Activated CD4-positive, alpha-beta memory T cell treated with anti-CD3 and anti-CD28 coated beads for 36 hours (primary cell): ENCODE measurements at regions of chrX and their contacts with region 1.

Region 1: GRCh38 chrX:120664081-120664480 is 34.2 kb upstream of the C1GALT1C1 start:
- DNase-seq: no peak
- H3K4me3 Mint-ChIP-seq: no peak overlapping the region
- H3K27ac Mint-ChIP-seq: no peak overlapping the region
- H3K4me1 Mint-ChIP-seq: peaks cover 6% of the 10 kb centered on the region
- H3K27me3 Mint-ChIP-seq: no peaks in the 10 kb centered on the region

Region 2: GRCh38 chrX:120485638-120486520 is 178.2 kb before region 1 on chrX:
- CTCF ChIA-PET with region 1: no interaction called
- POLR2A ChIA-PET with region 1: no interaction called
- intact Hi-C with region 1: loop called (anchors 1 kb)
- DNase-seq: peak; percentile 69
- H3K4me3 Mint-ChIP-seq: peak overlapping the region; percentile 69
- H3K27ac Mint-ChIP-seq: peak overlapping the region; percentile 86
- H3K4me1 Mint-ChIP-seq: peaks cover 26% of the 10 kb centered on the region
- H3K27me3 Mint-ChIP-seq: no peaks in the 10 kb centered on the region

Region 3: GRCh38 chrX:120514236-120514635 is 149.8 kb before region 1 on chrX:
- CTCF ChIA-PET with region 1: interaction called, 6 read pairs
- POLR2A ChIA-PET with region 1: no interaction called
- intact Hi-C with region 1: loop called (anchors 5 kb)
- DNase-seq: no peak
- H3K4me3 Mint-ChIP-seq: no peak overlapping the region
- H3K27ac Mint-ChIP-seq: no peak overlapping the region
- H3K4me1 Mint-ChIP-seq: no peaks in the 10 kb centered on the region
- H3K27me3 Mint-ChIP-seq: no peaks in the 10 kb centered on the region